Activated T-helper 2 cell treated with anti-CD3 and anti-CD28 coated beads, Interferon-gamma antibody, Interleukin-2, Interleukin-4, amounts not matched to agents 10 μg/mL and 5 μg/mL and 100 μg/mL, durations not matched to agents 14 hours and 24 hours and 36 hours (primary cell): ENCODE measurements at regions of chr6 and their contacts with region 1.

Region 1: GRCh38 chr6:30541515-30542403 is 14.5 kb downstream of the GNL1 start:
- DNase-seq: peak; percentile 71
- H3K4me3 Mint-ChIP-seq: peak overlapping the region; percentile 67
- H3K27ac Mint-ChIP-seq: peak overlapping the region; percentile 23
- H3K4me1 Mint-ChIP-seq: peaks cover 31% of the 10 kb centered on the region
- H3K27me3 Mint-ChIP-seq: peaks cover 1% of the 10 kb centered on the region

Region 2: DNA sequence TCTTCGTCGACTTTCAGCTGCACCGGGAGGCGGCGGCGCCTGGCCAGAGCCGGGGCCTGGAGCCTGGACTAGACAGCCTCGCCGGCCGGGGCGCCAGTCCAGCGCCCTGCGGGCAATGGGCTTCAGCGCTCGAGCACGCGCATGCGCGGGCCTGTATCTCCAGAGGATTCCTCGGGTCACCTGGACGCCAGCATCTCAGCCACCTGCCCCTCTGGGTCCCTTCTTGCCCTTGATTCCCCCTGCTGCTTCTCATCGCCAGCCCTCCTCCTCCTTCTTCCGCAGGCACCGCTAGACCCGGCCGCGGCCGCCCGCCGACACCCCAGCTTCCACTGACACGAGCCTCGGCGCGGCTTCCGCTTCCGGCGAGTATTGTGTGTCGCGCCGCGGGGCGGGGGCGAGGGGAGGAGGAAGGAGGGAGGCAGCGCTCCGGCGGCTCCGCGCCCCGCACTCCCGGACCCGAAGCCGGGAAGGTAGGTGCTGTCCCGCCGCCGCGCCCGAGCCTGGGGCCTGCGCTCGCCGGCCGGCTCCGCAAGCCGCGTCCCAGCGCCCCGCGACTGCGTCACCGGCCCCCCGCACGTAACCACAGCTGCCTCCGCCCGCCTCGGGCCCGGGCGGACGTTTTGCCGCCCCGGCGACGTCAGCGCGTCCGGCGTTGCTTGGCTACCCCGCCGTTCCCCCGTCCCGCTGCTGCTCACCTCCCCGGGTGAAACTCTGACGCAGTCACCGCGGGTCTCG is 215.1 kb before region 1 on chr6 and contains the start of gene TRIM39:
- intact Hi-C with region 1: no loop called
- DNase-seq: peak; percentile 85
- H3K4me3 Mint-ChIP-seq: peak within 1 kb of the TSS; percentile 94
- H3K27ac Mint-ChIP-seq: peak within 1 kb of the TSS; percentile 93
- H3K4me1 Mint-ChIP-seq: peaks cover 47% of the 10 kb centered on the region
- H3K27me3 Mint-ChIP-seq: no peaks in the 10 kb centered on the region
- total RNA-seq, gene TRIM39: 11.2 and 13.0 TPM in 2 replicates

Region 3: GRCh38 chr6:30483677-30484279 is 58.0 kb before region 1 on chr6:
- intact Hi-C with region 1: loop called (anchors 1 kb)
- DNase-seq: no peak
- H3K4me3 Mint-ChIP-seq: no peak overlapping the region
- H3K27ac Mint-ChIP-seq: no peak overlapping the region
- H3K4me1 Mint-ChIP-seq: peaks cover 30% of the 10 kb centered on the region
- H3K27me3 Mint-ChIP-seq: peaks cover 43% of the 10 kb centered on the region

Region 4: DNA sequence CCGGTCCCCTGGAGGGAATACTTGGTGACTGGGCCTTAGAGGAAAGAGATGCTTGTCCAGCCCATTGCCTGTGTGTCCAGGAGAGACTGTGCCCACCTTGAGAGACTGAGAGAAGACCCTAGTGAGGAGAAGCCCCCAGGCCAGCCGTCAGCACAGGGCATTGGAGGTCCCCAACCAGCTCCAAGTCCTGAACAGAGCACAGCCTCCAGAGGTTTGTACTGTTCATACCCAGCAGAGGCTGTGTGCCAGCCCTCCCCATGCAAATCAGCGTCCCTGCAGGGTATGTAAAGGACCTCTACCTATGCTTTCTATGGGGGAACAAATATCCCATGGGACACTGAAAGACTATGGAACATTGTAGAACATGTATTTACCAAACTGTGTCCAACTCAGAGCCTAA is 44.0 kb before region 1 on chr6:
- intact Hi-C with region 1: loop called (anchors 2 kb)
- DNase-seq: no peak
- H3K4me3 Mint-ChIP-seq: no peak overlapping the region
- H3K27ac Mint-ChIP-seq: peak overlapping the region; percentile 2
- H3K4me1 Mint-ChIP-seq: peaks cover 57% of the 10 kb centered on the region
- H3K27me3 Mint-ChIP-seq: no peaks in the 10 kb centered on the region

Region 5: GRCh38 chr6:30600451-30600961 is 58.7 kb after region 1 on chr6:
- intact Hi-C with region 1: loop called (anchors 5 kb)
- DNase-seq: no peak
- H3K4me3 Mint-ChIP-seq: no peak overlapping the region
- H3K27ac Mint-ChIP-seq: no peak overlapping the region
- H3K4me1 Mint-ChIP-seq: peaks cover 2% of the 10 kb centered on the region
- H3K27me3 Mint-ChIP-seq: no peaks in the 10 kb centered on the region

Region 6: GRCh38 chr6:30717042-30717844 is 175.5 kb after region 1 on chr6 and contains the start of gene MDC1:
- intact Hi-C with region 1: no loop called
- DNase-seq: peak; percentile 100
- H3K4me3 Mint-ChIP-seq: peak within 1 kb of the TSS; percentile 95
- H3K27ac Mint-ChIP-seq: peak within 1 kb of the TSS; percentile 98
- H3K4me1 Mint-ChIP-seq: peaks cover 44% of the 10 kb centered on the region
- H3K27me3 Mint-ChIP-seq: no peaks in the 10 kb centered on the region
- total RNA-seq, gene MDC1: 88.3 and 96.6 TPM in 2 replicates

Region 7: DNA sequence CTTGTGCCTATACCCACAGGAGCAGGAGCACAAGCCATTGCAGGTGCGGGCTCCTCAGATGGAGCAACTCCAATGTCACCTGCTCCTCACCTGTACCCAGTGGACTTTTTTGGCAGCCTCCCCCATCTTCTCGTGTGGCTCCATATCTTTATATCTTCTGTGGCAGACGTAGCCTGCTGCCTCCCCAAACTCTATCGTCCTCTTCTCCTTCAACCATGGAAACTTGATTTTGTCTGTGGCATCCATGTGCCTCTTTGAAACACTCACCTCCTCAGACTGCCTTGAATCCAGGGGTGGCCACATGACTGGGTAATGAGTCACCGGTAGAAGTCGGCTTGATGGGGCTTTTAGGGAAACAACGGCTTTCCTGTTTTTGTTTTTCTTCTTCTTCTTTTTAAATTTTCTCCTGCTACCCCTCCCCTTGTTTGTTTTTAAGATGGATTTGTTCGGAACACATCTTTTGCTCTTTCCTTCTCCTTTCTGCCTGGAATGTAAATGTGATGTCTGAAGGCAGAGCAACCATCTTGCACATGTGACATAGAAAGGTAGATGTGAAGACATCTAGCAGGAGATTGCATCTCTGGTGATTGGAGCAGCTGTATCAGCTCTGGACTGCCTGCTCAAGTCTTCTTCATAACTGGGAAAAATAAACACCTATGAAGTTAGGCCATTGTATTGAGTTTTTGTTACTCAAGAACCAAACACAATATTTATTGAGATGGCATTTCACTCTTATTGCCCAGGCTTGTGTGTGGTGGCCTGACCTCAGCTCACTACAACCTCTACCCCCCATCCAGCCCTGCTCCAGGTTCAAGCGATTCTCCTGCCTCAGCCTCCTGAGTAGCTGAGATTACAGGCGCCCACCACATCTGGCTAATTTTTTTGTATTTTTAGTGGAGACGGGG is 272.6 kb after region 1 on chr6:
- intact Hi-C with region 1: no loop called
- DNase-seq: no peak
- H3K4me3 Mint-ChIP-seq: peak overlapping the region; percentile 46
- H3K27ac Mint-ChIP-seq: peak overlapping the region; percentile 96
- H3K4me1 Mint-ChIP-seq: peaks cover 72% of the 10 kb centered on the region
- H3K27me3 Mint-ChIP-seq: no peaks in the 10 kb centered on the region